Gastrocnemius medialis (tissue), 4 donors: ENCODE measurements at regions of chr2 and their contacts with region 1.

Region 1: DNA sequence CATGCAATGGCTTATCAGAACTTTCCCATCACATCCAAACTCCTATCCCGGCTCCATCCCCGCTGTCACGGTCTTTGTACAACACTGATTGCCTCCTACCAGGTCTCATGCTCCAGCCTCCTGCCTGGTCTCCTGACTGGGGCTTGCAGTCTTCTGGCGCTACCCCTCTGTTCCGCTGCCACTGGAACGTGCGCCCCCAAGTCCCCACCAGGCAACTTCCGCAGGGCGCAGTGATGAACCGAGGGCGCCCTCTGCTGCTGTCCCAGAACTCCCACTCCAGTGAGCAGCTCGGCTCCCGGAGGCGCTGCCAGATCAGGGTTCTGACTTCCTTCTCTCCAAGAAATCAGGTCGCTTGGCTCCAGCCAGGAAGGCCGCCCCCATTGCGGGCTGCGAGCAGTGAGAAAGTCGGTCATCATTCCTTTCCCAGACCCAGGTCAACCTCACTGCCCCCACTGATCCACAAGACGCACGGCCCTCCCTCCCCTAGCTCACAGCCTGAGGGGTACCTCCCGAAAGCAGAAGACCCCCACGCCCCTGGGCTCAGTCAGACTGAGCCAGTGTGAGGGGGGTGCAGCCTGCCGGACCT is 43.9 kb upstream of the RAB11FIP5 start:
- DNase-seq: peak; percentile 17 to 34
- ATAC-seq: peak; percentile 62 to 72
- H3K4me3 ChIP-seq: no peak overlapping the region
- H3K27ac ChIP-seq: no peak overlapping the region
- H3K4me1 ChIP-seq: peaks cover 0 to 3% of the 10 kb centered on the region in 2 donors
- H3K27me3 ChIP-seq: peaks cover 0 to 9% (median 5%) of the 10 kb centered on the region in 3 donors
- CTCF ChIP-seq: peak; percentile 43 to 82 (median 73)
- POLR2A ChIP-seq: no peak

Region 2: GRCh38 chr2:72993147-72993932 is 163.3 kb before region 1 on chr2:
- in situ Hi-C with region 1: loop called in 3 of 4 experiments (anchors 5 to 25 kb)
- intact Hi-C with region 1: loop called (anchors 2 kb)
- DNase-seq: no peak
- ATAC-seq: no peak
- H3K4me3 ChIP-seq: no peak overlapping the region
- H3K27ac ChIP-seq: no peak overlapping the region
- H3K4me1 ChIP-seq: no peaks in the 10 kb centered on the region
- H3K27me3 ChIP-seq: no peaks in the 10 kb centered on the region
- CTCF ChIP-seq: peak; percentile 54 to 82 (median 78)
- POLR2A ChIP-seq: no peak

Region 3: GRCh38 chr2:72999729-73000725 is 156.6 kb before region 1 on chr2:
- in situ Hi-C with region 1: loop called in 2 of 4 experiments (anchors 10 to 25 kb)
- intact Hi-C with region 1: loop called (anchors 2 kb)
- DNase-seq: no peak
- ATAC-seq: no peak
- H3K4me3 ChIP-seq: no peak overlapping the region
- H3K27ac ChIP-seq: no peak overlapping the region
- H3K4me1 ChIP-seq: no peaks in the 10 kb centered on the region
- H3K27me3 ChIP-seq: no peaks in the 10 kb centered on the region
- CTCF ChIP-seq: no peak
- POLR2A ChIP-seq: no peak

Region 4: GRCh38 chr2:73080711-73081131 is 75.9 kb before region 1 on chr2:
- in situ Hi-C with region 1: loop called (anchors 5 kb)
- intact Hi-C with region 1: loop called (anchors 1 kb)
- DNase-seq: no peak
- ATAC-seq: no peak
- H3K4me3 ChIP-seq: no peak overlapping the region
- H3K27ac ChIP-seq: no peak overlapping the region
- H3K4me1 ChIP-seq: peaks cover 3 to 5% of the 10 kb centered on the region in 2 donors
- H3K27me3 ChIP-seq: no peaks in the 10 kb centered on the region
- CTCF ChIP-seq: no peak
- POLR2A ChIP-seq: no peak

Region 5: GRCh38 chr2:73085691-73086360 is 70.8 kb before region 1 on chr2:
- in situ Hi-C with region 1: loop called (anchors 5 kb)
- intact Hi-C with region 1: loop called (anchors 1 kb)
- DNase-seq: peak; percentile 52 to 74
- ATAC-seq: peak; percentile 79 to 82
- H3K4me3 ChIP-seq: no peak overlapping the region
- H3K27ac ChIP-seq: no peak overlapping the region
- H3K4me1 ChIP-seq: no peaks in the 10 kb centered on the region
- H3K27me3 ChIP-seq: no peaks in the 10 kb centered on the region
- CTCF ChIP-seq: peak; percentile 81 to 96 (median 89)
- POLR2A ChIP-seq: no peak